CD4-positive, alpha-beta memory T cell (primary cell): ENCODE measurements at regions of chr11 and their contacts with region 1.

Region 1: GRCh38 chr11:61899146-61899841 is 7.9 kb upstream of the FADS3 start:
- DNase-seq: peak; percentile 89 to 92 (median 90)
- H3K4me3 ChIP-seq: no peak overlapping the region
- H3K4me3 Mint-ChIP-seq: peak overlapping the region in 1 of 8 donors; percentile 4
- H3K27ac ChIP-seq: no peak overlapping the region
- H3K27ac Mint-ChIP-seq: peak overlapping the region in 6 of 7 donors; percentile 2 to 93 (median 76)
- H3K4me1 ChIP-seq: peaks cover 7% of the 10 kb centered on the region
- H3K4me1 Mint-ChIP-seq: peaks cover 4 to 6% (median 5%) of the 10 kb centered on the region in 4 donors
- H3K27me3 ChIP-seq: no peaks in the 10 kb centered on the region
- H3K27me3 Mint-ChIP-seq: no peaks in the 10 kb centered on the region

Region 2: DNA sequence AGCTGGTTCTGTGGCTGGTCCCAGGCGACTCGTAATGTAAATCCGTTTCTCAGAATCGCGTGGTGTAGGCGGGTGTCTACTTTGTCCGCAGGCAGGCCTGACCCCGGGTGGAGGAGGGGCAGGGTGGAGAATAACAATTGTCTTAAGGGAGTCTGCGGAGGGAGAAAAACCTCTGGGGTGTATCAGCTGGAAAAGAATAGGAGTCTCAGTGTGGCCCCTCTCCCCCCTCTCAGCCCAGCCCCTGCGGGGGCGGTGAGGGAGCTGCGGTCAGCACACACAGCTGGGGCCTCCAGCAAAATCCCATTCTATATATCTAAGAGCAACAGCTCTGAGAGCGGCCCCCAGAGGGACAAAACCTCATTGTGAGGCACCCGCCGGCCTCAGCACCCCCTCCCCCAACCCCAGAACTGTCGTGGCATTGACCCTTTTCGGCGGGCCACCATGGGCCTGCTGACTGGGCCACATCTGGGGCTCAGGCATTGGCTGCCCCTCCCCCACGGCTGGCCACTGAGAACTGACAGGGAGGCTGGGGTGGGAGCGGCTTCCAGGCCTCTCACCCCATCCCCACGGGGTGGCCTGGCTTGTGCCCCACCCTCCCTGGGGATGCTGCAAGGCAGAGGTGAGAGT is 149.6 kb before region 1 on chr11:
- CTCF ChIA-PET with region 1: no interaction called
- POLR2A ChIA-PET with region 1: no interaction called
- intact Hi-C with region 1: no loop called
- DNase-seq: no peak
- H3K4me3 ChIP-seq: no peak overlapping the region
- H3K4me3 Mint-ChIP-seq: peak overlapping the region in 1 of 8 donors; percentile 18
- H3K27ac ChIP-seq: no peak overlapping the region
- H3K27ac Mint-ChIP-seq: peak overlapping the region in 1 of 7 donors; percentile 66
- H3K4me1 ChIP-seq: peaks cover 10% of the 10 kb centered on the region
- H3K4me1 Mint-ChIP-seq: peaks cover 2 to 22% (median 11%) of the 10 kb centered on the region in 4 donors
- H3K27me3 ChIP-seq: no peaks in the 10 kb centered on the region
- H3K27me3 Mint-ChIP-seq: peaks cover 11 to 14% of the 10 kb centered on the region in 2 donors

Region 3: GRCh38 chr11:61776551-61777075 is 122.7 kb before region 1 on chr11:
- CTCF ChIA-PET with region 1: no interaction called
- POLR2A ChIA-PET with region 1: no interaction called
- intact Hi-C with region 1: no loop called
- DNase-seq: peak in 4 of 5 donors; percentile 31 to 47 (median 36)
- H3K4me3 ChIP-seq: peak overlapping the region in 1 of 2 donors; percentile 28
- H3K4me3 Mint-ChIP-seq: peak overlapping the region; percentile 26 to 82 (median 64)
- H3K27ac ChIP-seq: no peak overlapping the region
- H3K27ac Mint-ChIP-seq: peak overlapping the region in 4 of 7 donors; percentile 46 to 71 (median 65)
- H3K4me1 ChIP-seq: peaks cover 21% of the 10 kb centered on the region
- H3K4me1 Mint-ChIP-seq: peaks cover 6 to 33% (median 12%) of the 10 kb centered on the region in 4 donors
- H3K27me3 ChIP-seq: no peaks in the 10 kb centered on the region
- H3K27me3 Mint-ChIP-seq: no peaks in the 10 kb centered on the region

Region 4: DNA sequence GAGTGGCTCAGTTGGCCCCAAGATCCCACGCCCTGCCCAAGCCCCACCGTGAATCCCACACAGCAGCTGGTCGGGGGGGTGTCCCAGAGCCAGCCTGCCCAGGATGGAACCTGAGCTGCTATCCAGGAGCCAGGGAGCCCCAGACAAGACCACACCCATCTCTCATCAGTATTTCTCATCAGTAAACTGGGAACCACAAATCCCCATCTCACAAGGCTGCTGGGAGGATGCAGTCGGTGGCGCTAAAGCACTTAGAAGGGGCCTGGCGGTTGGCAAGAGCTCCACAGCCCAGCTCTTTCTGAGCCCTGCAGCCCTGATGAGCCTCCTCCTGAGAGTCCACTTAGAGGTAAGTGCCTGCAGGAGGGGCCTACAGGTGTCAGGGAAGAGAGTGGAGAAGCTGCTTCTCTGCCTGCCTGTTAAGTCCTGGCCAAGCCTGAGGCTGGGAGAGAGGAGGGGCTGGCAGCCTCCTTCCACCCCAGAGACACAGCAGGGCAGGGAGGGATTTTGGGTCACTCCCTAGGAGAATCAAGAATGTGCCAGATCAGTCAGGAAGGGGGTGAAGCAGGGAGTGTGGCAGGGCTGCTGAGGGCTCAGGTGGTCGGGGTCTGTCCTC is 14.0 kb before region 1 on chr11:
- CTCF ChIA-PET with region 1: interaction called, 49 read pairs
- POLR2A ChIA-PET with region 1: interaction called, 5 read pairs
- intact Hi-C with region 1: no loop called
- DNase-seq: no peak
- H3K4me3 ChIP-seq: no peak overlapping the region
- H3K4me3 Mint-ChIP-seq: no peak overlapping the region
- H3K27ac ChIP-seq: no peak overlapping the region
- H3K27ac Mint-ChIP-seq: no peak overlapping the region
- H3K4me1 ChIP-seq: peaks cover 5% of the 10 kb centered on the region
- H3K4me1 Mint-ChIP-seq: peaks cover 0 to 5% (median 0%) of the 10 kb centered on the region in 4 donors
- H3K27me3 ChIP-seq: no peaks in the 10 kb centered on the region
- H3K27me3 Mint-ChIP-seq: no peaks in the 10 kb centered on the region

Region 5: DNA sequence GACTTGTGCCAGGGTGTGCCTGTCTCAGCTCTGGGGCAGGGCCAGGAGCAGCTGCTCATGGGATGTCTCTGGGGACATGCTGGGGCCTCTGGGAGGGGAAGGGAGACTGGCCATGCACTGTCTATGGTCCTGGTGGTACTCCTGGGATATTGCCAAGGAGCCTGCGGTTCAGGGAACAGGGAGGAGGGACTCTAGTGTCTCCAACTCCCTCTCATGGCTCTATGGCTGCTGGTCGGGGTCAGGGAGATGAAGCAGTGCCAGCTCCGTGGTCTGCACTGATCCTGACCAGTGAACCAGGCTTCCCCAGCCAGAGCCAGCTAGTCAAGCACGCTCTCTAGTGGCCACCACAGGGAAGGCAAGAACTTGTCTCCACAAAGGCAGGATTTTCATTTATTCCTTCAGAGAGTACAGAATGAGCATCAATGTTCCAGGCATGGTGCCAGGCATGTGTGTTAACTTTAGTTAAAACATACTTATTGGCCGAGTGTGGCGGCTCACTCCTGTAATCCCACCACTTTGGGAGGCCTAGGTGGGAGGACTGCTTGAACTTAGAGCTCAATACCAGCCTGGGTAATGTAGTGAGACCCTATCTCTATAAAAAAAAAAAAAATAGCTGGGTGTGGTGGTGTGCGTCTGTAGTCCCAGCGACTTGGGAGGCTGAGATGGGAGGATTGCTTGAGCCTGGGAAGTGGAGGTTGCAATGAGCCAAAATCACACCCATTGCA is 48.4 kb after region 1 on chr11:
- CTCF ChIA-PET with region 1: interaction called, 65 read pairs
- POLR2A ChIA-PET with region 1: interaction called, 3 read pairs
- intact Hi-C with region 1: loop called (anchors 1 kb)
- DNase-seq: peak; percentile 55 to 64 (median 59)
- H3K4me3 ChIP-seq: no peak overlapping the region
- H3K4me3 Mint-ChIP-seq: no peak overlapping the region
- H3K27ac ChIP-seq: no peak overlapping the region
- H3K27ac Mint-ChIP-seq: peak overlapping the region in 2 of 7 donors; percentile 41 to 82
- H3K4me1 ChIP-seq: no peaks in the 10 kb centered on the region
- H3K4me1 Mint-ChIP-seq: no peaks in the 10 kb centered on the region
- H3K27me3 ChIP-seq: no peaks in the 10 kb centered on the region
- H3K27me3 Mint-ChIP-seq: peaks cover 0 to 3% of the 10 kb centered on the region in 2 donors

Region 6: DNA sequence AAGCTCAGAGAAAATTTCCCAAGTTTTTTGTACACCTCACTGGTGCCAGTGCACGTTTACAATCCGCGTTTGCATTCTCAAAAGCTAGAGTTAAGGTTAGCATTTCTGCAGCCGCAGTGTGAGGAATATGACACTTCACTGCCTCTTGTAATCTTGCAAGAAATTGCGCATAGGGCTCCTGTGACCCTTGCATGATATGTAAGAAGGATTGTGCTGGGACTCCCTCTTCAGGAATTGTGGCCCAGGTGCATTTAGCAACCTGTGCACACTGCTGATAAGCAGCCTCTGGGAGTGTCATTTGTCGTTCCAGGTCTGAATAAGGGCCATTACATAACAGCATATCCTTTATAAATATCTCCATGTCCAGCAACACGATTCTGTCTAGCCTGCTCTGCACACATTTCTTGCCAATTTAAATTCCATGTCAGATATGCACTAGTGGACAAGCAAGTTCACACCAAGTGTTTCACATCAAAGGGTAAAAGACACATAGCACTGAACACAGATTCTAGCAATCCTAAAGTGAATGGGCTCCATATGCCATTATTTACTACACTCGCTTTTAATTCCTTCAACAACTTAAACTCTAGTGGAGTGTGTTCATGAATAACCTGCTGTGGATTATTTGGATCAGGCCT is 155.3 kb after region 1 on chr11:
- CTCF ChIA-PET with region 1: interaction called, 17 read pairs
- POLR2A ChIA-PET with region 1: no interaction called
- intact Hi-C with region 1: loop called (anchors 1 kb)
- DNase-seq: peak; percentile 11 to 53 (median 36)
- H3K4me3 ChIP-seq: no peak overlapping the region
- H3K4me3 Mint-ChIP-seq: no peak overlapping the region
- H3K27ac ChIP-seq: no peak overlapping the region
- H3K27ac Mint-ChIP-seq: peak overlapping the region in 1 of 7 donors; percentile 29
- H3K4me1 ChIP-seq: no peaks in the 10 kb centered on the region
- H3K4me1 Mint-ChIP-seq: no peaks in the 10 kb centered on the region
- H3K27me3 ChIP-seq: no peaks in the 10 kb centered on the region
- H3K27me3 Mint-ChIP-seq: peaks cover 0 to 3% of the 10 kb centered on the region in 2 donors